Thyroid gland (tissue), 4 donors: ENCODE measurements at regions of chr2 and their contacts with region 1.

Region 1: GRCh38 chr2:205885492-205886099 is 200.4 kb downstream of the INO80D start:
- DNase-seq: peak; percentile 84 to 90
- H3K4me3 ChIP-seq: no peak overlapping the region
- H3K27ac ChIP-seq: no peak overlapping the region
- H3K4me1 ChIP-seq: no peaks in the 10 kb centered on the region
- H3K27me3 ChIP-seq: no peaks in the 10 kb centered on the region
- CTCF ChIP-seq: peak in 5 of 6 experiments; percentile 70 to 95 (median 88)
- POLR2A ChIP-seq: no peak

Region 2: DNA sequence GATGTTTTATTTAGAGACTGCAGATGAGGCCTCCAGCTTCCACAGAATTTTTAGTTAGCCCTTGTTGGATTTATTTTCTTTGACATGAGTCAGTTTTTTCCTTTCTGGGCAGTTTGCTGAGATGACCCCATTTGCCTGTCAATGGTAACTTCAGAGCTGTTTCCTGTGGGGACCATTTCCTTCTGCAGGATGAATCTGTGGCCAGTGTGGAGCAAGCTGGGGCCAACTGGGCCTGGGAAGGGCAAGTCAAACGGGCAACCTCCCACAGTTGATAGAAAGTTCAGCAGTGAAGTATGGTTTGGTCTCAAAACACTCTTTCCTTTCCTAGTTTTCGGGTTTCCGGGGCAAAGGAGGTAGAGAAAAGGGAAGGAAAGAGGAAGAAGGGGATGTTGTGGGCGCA is 494.7 kb before region 1 on chr2:
- intact Hi-C with region 1: no loop called
- DNase-seq: peak in 1 of 2 donors; percentile 5
- H3K4me3 ChIP-seq: no peak overlapping the region
- H3K27ac ChIP-seq: no peak overlapping the region
- H3K4me1 ChIP-seq: no peaks in the 10 kb centered on the region
- H3K27me3 ChIP-seq: no peaks in the 10 kb centered on the region
- CTCF ChIP-seq: no peak
- POLR2A ChIP-seq: no peak

Region 3: GRCh38 chr2:205776139-205776538 is 109.5 kb before region 1 on chr2:
- intact Hi-C with region 1: loop called (anchors 5 kb)
- DNase-seq: peak; percentile 59 to 67
- H3K4me3 ChIP-seq: no peak overlapping the region
- H3K27ac ChIP-seq: no peak overlapping the region
- H3K4me1 ChIP-seq: peaks cover 0 to under 1% of the 10 kb centered on the region in 2 donors
- H3K27me3 ChIP-seq: no peaks in the 10 kb centered on the region
- CTCF ChIP-seq: peak; percentile 19 to 75 (median 55)
- POLR2A ChIP-seq: no peak